ENCODE measurements at regions of chr19 and their contacts with region 1.

Region 1: DNA sequence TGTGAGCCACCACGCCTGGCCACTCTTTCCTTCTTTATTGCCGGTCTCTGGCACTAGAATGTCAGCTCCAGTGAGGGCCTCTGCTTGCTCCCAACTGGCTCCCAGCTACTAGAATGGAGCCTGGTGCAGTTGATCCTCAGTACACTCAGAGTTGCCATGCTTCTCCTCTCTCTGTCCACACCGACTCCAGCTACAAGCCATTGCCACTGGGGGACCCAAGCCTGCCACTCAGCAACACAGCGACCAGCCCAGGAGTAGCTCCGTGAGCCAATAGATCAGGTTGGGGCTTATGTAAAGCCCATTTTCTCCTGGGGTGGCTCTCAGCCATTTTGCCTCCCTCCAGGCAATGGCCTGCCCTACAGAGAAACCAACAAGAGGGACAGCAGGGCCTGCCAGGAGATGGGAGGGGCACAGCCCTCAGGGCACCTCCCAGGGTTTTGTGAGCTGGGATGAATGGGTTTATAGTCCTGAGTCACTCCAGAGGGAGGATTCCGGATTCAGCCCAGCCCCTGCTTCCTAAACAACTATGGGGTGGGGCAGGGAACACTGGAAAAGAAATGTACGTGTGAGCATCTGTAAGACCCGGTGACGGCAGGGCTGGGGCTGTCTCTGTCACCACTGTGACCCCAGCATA is 36.5 kb downstream of the OPA3 start:
- DNase-seq: peak; percentile 91 to 93
- ATAC-seq: peak; percentile 92 to 93
- H3K4me3 ChIP-seq: no peak overlapping the region
- H3K27ac ChIP-seq: peak overlapping the region; percentile 68 to 84
- H3K4me1 ChIP-seq: peaks cover 16% of the 10 kb centered on the region
- CTCF ChIP-seq: no peak
- EP300 ChIP-seq: no peak
- POLR2A ChIP-seq: no peak
- RAD21 ChIP-seq: no peak

Region 2: GRCh38 chr19:45607071-45608029 is 59.3 kb after region 1 on chr19:
- CTCF ChIA-PET with region 1: interaction called, 10 read pairs
- POLR2A ChIA-PET with region 1: no interaction called
- DNase-seq: peak; percentile 77 to 81
- ATAC-seq: peak; percentile 82 to 86
- H3K4me3 ChIP-seq: peak overlapping the region; percentile 28; the same call in 2 of the 3 replicates
- H3K27ac ChIP-seq: peak overlapping the region; percentile 65 to 84
- H3K4me1 ChIP-seq: peaks cover 8% of the 10 kb centered on the region
- CTCF ChIP-seq: peak; percentile 91
- EP300 ChIP-seq: no peak
- POLR2A ChIP-seq: no peak
- RAD21 ChIP-seq: peak; percentile 80 to 84